Breast epithelium (tissue), 4 donors: ENCODE measurements at regions of chr7 and their contacts with region 1.

Region 1: GRCh38 chr7:78379148-78379547 is 580.6 kb downstream of the PHTF2 start:
- DNase-seq: no peak
- H3K4me3 ChIP-seq: no peak overlapping the region
- H3K27ac ChIP-seq: no peak overlapping the region
- H3K4me1 ChIP-seq: no peaks in the 10 kb centered on the region
- H3K27me3 ChIP-seq: no peaks in the 10 kb centered on the region
- CTCF ChIP-seq: no peak
- POLR2A ChIP-seq: no peak

Region 2: GRCh38 chr7:78535655-78536054 is 156.5 kb after region 1 on chr7:
- intact Hi-C with region 1: no loop called
- DNase-seq: no peak
- H3K4me3 ChIP-seq: no peak overlapping the region
- H3K27ac ChIP-seq: no peak overlapping the region
- H3K4me1 ChIP-seq: no peaks in the 10 kb centered on the region
- H3K27me3 ChIP-seq: no peaks in the 10 kb centered on the region
- CTCF ChIP-seq: no peak
- POLR2A ChIP-seq: no peak

Region 3: DNA sequence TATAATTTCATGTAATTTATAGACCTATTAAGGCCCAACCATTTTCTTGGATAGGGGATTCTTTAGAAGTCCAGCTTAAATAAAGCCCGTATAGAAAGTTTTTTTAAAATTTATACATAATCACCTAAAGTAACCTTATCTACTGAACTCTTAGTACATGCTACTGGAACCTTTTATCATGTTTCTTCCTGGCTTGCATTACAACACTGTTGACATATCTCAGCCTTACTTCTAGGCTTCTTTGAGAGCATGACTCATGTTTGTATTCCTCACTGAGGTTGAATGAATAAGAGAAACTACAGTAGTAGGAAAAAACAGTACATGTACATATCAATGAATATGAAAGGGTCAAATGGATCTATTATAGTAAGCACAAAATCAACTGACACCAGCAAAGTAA is 1082.5 kb after region 1 on chr7:
- intact Hi-C with region 1: loop called (anchors 10 kb)
- DNase-seq: no peak
- H3K4me3 ChIP-seq: no peak overlapping the region
- H3K27ac ChIP-seq: no peak overlapping the region
- H3K4me1 ChIP-seq: no peaks in the 10 kb centered on the region
- H3K27me3 ChIP-seq: no peaks in the 10 kb centered on the region
- CTCF ChIP-seq: no peak
- POLR2A ChIP-seq: no peak